Activated naive CD4-positive, alpha-beta T cell treated with anti-CD3 and anti-CD28 coated beads for 36 hours (primary cell): ENCODE measurements at regions of chr10 and their contacts with region 1.

Region 1: GRCh38 chr10:80205478-80206276 is at the start of gene ANXA11:
- DNase-seq: peak; percentile 86
- H3K4me3 Mint-ChIP-seq: peak within 1 kb of the TSS; percentile 84
- H3K27ac Mint-ChIP-seq: peak within 1 kb of the TSS; percentile 96
- H3K4me1 Mint-ChIP-seq: peaks cover 38% of the 10 kb centered on the region
- H3K27me3 Mint-ChIP-seq: no peaks in the 10 kb centered on the region
- total RNA-seq, gene ANXA11: 142 TPM

Region 2: DNA sequence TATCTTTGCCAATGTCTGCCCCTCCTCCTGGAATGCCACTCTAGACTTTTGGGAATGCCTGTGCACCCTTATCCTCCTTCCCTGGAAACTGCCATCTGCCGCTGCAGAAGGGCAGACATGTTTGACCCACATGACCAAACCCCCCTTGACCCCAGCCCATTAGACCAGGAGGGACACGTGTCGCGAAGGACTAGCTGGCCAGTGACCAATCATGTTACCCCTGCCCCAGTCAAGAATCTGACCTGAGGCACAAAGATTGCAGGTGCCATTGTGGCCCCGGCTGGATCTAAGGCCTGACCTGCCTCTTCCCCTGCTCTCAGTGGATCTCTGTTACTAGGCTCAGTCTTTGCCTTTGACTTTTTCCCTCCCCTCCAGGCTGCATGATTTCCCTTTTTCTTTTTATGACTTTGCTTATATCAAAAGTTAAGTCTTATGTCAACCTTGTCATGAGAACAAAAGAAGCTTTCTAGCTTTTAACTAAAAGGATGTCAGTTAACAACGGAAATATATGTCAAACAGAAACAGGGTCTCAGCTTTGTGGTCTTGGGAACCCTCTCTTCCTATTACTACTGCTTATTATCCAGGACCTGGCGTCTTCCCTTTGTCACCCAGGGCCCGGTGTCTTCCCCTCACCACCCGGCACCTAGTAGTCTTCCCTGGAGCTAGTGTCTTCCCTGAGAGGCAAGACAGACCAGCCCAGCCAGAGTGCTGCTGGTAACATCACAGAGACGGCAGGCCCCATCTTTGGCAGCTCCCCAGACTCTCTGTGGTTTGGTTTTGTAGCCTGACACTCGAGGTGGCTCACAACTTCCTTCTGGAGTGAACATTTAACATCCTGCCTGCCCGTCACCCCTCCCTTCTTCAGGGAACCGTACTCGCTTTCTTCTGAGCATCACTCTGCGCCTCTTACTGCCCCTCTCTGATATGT is 882.8 kb before region 1 on chr10:
- CTCF ChIA-PET with region 1: no interaction called
- intact Hi-C with region 1: loop called (anchors 5 kb)
- DNase-seq: peak; percentile 95
- H3K4me3 Mint-ChIP-seq: peak overlapping the region; percentile 33
- H3K27ac Mint-ChIP-seq: peak overlapping the region; percentile 92
- H3K4me1 Mint-ChIP-seq: peaks cover 68% of the 10 kb centered on the region
- H3K27me3 Mint-ChIP-seq: no peaks in the 10 kb centered on the region

Region 3: GRCh38 chr10:79445141-79445976 is 760.3 kb before region 1 on chr10 and contains the start of gene ZCCHC24:
- CTCF ChIA-PET with region 1: no interaction called
- intact Hi-C with region 1: loop called (anchors 5 kb)
- DNase-seq: peak; percentile 92
- H3K4me3 Mint-ChIP-seq: peak within 1 kb of the TSS; percentile 70
- H3K27ac Mint-ChIP-seq: no peak within 1 kb of the TSS
- H3K4me1 Mint-ChIP-seq: peaks cover 21% of the 10 kb centered on the region
- H3K27me3 Mint-ChIP-seq: peaks cover 12% of the 10 kb centered on the region
- total RNA-seq, gene ZCCHC24: 0.52 to 0.69 TPM

Region 4: DNA sequence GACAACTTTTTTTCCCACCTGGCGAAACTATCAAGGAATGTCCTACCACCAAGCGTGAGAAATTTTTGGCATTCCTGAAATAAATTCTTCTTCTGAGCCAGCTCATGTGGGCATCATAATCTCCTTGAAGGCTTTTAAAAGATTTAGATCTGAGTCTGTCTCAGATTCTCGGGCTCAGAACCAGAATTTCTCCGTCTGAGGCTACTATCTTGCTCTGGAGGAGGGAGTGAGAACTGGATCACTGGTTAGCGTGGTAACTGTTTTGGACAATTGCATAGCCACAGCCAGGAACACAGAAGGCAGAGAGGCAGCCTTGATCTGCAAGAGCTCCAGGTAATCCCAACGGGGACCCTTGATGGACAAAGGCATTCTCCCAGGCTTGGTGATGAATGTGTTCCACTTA is 74.2 kb before region 1 on chr10:
- CTCF ChIA-PET with region 1: no interaction called
- intact Hi-C with region 1: no loop called
- DNase-seq: no peak
- H3K4me3 Mint-ChIP-seq: no peak overlapping the region
- H3K27ac Mint-ChIP-seq: no peak overlapping the region
- H3K4me1 Mint-ChIP-seq: peaks cover 4% of the 10 kb centered on the region
- H3K27me3 Mint-ChIP-seq: peaks cover 29% of the 10 kb centered on the region

Region 5: GRCh38 chr10:80144067-80144695 is 61.5 kb before region 1 on chr10:
- CTCF ChIA-PET with region 1: interaction called, 27 read pairs
- intact Hi-C with region 1: loop called (anchors 1 kb)
- DNase-seq: peak; percentile 61
- H3K4me3 Mint-ChIP-seq: peak overlapping the region; percentile 67
- H3K27ac Mint-ChIP-seq: no peak overlapping the region
- H3K4me1 Mint-ChIP-seq: peaks cover 15% of the 10 kb centered on the region
- H3K27me3 Mint-ChIP-seq: peaks cover 5% of the 10 kb centered on the region

Region 6: GRCh38 chr10:80187465-80188409 is 17.9 kb before region 1 on chr10:
- CTCF ChIA-PET with region 1: interaction called, 13 read pairs
- intact Hi-C with region 1: loop called (anchors 1 kb)
- DNase-seq: peak; percentile 83
- H3K4me3 Mint-ChIP-seq: peak overlapping the region; percentile 53
- H3K27ac Mint-ChIP-seq: peak overlapping the region; percentile 89
- H3K4me1 Mint-ChIP-seq: peaks cover 81% of the 10 kb centered on the region
- H3K27me3 Mint-ChIP-seq: no peaks in the 10 kb centered on the region